Lower lobe of right lung (tissue), 2 donors: ENCODE measurements at regions of chr15 and their contacts with region 1.

Region 1: DNA sequence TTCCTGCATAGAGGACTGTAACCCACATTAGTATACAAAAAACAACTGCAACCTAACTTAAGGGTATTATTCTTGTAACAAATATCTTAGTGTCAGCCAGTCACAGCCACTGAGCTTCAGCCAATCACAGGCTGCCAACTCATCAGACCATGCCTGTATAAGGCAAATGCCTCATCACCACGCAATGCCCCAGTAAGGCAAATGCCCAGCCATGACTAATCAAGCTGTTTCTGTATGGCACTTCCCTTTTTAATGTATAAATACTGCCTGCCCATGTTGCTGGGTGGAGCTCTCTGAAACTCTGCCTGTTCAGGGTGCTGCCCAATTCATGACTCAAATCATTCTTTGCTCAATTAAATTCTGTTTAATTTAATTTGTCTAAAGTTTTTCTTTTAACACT is 18.4 kb upstream of the GABRA5 start:
- DNase-seq: no peak
- ATAC-seq: no peak
- H3K4me3 ChIP-seq: no peak overlapping the region
- H3K27ac ChIP-seq: no peak overlapping the region
- H3K4me1 ChIP-seq: no peaks in the 10 kb centered on the region
- H3K27me3 ChIP-seq: no peaks in the 10 kb centered on the region
- CTCF ChIP-seq: no peak

Region 2: GRCh38 chr15:26781816-26782215 is 66.7 kb before region 1 on chr15:
- intact Hi-C with region 1: loop called (anchors 10 kb)
- DNase-seq: no peak
- ATAC-seq: no peak
- H3K4me3 ChIP-seq: no peak overlapping the region
- H3K27ac ChIP-seq: no peak overlapping the region
- H3K4me1 ChIP-seq: no peaks in the 10 kb centered on the region
- H3K27me3 ChIP-seq: peaks cover 3% of the 10 kb centered on the region
- CTCF ChIP-seq: no peak